Dorsolateral prefrontal cortex (tissue), 120 donors: ENCODE measurements at regions of chr3 and their contacts with region 1.

Region 1: DNA sequence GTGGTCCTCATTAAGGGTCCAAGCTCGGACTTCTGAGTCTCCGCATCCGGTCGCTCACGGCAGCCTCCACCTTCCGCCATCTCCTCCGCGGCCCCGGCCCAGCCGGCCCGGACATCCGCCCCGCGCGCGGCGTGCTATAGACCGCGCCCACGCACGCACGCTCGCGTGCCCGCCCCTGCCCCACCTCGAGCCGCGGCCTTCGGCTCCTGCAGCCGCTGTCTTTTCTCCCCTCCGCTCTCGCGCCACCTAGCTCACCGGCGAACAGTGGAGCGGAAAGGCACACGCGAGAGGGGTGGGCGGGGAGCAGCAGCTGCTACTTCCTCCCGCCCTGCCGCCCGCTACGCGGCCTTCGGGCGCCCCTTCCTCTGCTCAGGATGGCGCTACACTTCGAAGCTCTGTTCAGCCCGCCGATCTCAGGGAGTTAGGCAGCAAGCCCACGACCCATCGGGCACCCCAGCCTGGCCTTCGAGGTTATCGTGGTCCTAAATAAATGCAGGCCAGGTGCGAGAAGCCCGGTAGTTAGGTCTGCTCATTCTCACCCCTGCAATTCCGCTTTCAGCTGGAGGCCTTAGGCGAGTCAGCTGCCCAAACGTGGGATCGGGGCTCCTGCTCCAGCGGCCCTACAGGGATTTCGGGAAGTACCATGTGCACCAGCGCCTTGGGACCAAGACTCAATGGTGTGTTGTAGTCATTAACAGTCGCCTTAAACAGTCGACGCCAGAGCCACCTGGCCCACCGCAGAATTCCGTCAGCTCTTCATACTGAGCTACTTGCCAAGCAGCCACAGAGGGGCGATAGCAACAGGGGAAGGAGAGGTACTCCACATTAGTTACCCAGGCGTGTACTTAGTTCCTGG is at the start of gene USP4:
- DNase-seq: peak; percentile 63 to 92 (median 84)
- H3K4me3 ChIP-seq: peak within 1 kb of the TSS; percentile 58 to 97 (median 87)
- H3K27ac ChIP-seq: peak within 1 kb of the TSS; percentile 54 to 97 (median 90)
- H3K27me3 ChIP-seq: no peaks in the 10 kb centered on the region
- CTCF ChIP-seq: peak in 51 of 56 donors; percentile 21 to 74 (median 47)
- total RNA-seq, gene USP4: 57.2 to 94.0 (median 74.4) TPM

Region 2: DNA sequence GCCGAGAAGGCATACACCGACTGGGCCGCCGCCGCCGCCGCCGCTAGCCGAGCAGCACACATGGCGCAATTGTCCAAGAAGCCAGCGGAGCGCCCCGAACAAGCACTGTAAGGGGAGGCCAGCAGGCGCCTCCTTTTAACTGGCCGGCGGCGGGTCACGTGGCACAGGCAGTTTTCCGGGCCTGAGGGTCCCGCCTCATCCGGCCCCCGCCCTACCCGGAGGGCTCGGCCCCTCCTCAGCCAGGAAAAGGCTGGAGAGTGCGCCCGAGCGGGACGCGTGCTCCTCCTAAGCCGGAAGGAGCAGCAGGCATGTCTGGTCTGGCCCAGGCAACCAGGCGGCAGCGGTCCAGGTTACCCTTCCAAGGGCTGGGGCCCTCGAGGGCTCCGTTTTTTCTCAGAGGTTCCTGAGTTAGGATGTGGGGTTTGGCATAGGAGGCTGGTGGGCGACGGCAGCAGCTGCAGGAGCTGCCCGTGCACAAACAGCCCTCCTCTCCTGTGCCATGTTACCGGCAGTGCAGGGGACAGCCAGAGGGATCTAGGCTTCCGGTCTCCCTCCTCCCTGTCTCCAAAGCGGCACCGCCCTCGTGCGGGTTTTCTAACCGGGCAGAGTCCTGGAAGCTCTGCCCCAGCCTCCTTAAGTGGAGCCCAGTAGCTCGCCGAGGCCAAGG is 18.2 kb after region 1 on chr3 and contains the start of gene GPX1:
- intact Hi-C with region 1: loop called in 1 of 2 experiments (anchors 1 kb)
- DNase-seq: peak; percentile 90 to 96 (median 94)
- H3K4me3 ChIP-seq: peak within 1 kb of the TSS; percentile 53 to 88 (median 78)
- H3K27ac ChIP-seq: peak within 1 kb of the TSS; percentile 62 to 96 (median 88)
- H3K27me3 ChIP-seq: no peaks in the 10 kb centered on the region
- CTCF ChIP-seq: peak in 22 of 56 donors; percentile 7 to 48 (median 26)
- total RNA-seq, gene GPX1: 82.0 to 191 (median 135) TPM

Region 3: GRCh38 chr3:49387721-49388120 is 47.5 kb after region 1 on chr3:
- intact Hi-C with region 1: no loop called
- DNase-seq: no peak
- H3K4me3 ChIP-seq: no peak overlapping the region
- H3K27ac ChIP-seq: no peak overlapping the region
- H3K27me3 ChIP-seq: no peaks in the 10 kb centered on the region
- CTCF ChIP-seq: no peak